HEK293 (cell line): ENCODE measurements at regions of chrX and their contacts with region 1.

Region 1: DNA sequence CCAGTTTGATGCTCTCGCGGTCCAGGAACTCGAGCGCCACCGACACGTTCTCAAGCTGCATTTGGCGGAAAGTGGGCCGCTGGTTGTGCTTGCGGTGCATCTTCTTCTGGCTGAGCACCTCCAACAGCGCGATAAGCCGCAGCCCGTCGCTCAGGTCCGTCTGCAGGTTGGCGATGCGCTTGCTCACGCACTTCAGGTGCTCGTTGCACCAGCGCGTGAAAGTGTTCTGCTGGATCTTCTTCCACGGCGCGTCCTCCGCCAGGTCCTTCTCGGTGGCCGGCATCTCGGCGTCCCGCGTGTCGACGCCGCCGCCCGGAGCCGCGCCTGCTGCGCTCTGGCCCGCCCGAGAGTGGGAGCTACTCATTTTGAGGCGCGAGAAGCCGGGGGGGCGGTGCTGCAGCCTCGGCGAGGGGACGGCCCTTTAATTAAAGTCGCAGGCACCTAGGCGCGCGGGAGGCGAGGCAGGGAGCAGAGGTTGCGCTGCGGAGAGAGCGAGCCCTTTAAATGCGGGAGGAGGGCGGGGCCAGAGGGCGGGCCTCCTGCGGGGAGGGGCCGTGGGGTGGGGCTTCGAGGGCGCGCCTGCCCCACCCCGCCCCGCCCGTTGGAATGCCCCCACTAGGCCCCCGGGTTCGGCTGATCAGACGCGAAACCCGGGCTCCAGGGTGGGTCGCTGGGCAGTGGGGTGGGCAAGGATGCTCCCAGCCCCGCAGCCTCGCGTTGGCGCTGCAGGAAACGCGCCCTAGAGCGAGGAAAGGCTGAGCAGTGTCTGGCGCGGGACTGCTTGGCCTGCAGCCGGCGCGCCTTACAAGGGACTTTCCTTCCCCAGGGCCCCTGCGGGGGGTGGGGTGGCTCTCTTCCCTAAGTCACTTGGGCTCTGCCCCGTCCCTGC is 3.3 kb downstream of the FLNA start:
- H3K4me3 ChIP-seq: peak overlapping the region; percentile 68
- H3K27ac ChIP-seq: peak overlapping the region; percentile 93
- H3K4me1 ChIP-seq: peaks cover 16% of the 10 kb centered on the region
- CTCF ChIP-seq: peak; percentile 46

Region 2: DNA sequence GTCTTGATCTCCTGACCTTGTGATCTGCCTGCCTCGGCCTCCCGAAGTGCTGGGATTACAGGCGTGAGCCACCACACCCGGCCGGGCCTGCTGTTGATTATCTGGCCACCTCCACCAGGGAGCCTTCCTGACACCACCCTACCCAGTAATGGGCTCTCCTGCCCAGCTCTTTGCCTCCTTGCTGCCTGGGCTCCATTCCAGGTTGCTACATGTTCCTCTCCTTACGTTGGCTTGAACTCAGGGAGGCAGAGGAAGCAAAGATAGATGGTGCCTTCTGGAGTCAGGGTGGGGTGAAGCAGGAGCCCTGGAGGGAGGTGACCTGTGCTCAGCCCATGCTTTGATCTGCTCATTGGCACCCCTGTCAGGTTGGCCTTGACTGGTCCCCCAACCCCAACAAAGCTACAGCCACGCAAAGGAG is 23.0 kb before region 1 on chrX:
- CTCF ChIA-PET with region 1: interaction called, 3 read pairs
- POLR2A ChIA-PET with region 1: interaction called, 10 read pairs
- H3K4me3 ChIP-seq: no peak overlapping the region
- H3K27ac ChIP-seq: no peak overlapping the region
- H3K4me1 ChIP-seq: no peaks in the 10 kb centered on the region
- CTCF ChIP-seq: no peak

Region 3: GRCh38 chrX:154384284-154384892 is 13.3 kb after region 1 on chrX:
- CTCF ChIA-PET with region 1: interaction called, 18 read pairs
- POLR2A ChIA-PET with region 1: interaction called, 48 read pairs
- H3K4me3 ChIP-seq: no peak overlapping the region
- H3K27ac ChIP-seq: no peak overlapping the region
- H3K4me1 ChIP-seq: no peaks in the 10 kb centered on the region
- CTCF ChIP-seq: 0 out of 2 replicates have a peak, but pooled peaks have one; percentile 9

Region 4: DNA sequence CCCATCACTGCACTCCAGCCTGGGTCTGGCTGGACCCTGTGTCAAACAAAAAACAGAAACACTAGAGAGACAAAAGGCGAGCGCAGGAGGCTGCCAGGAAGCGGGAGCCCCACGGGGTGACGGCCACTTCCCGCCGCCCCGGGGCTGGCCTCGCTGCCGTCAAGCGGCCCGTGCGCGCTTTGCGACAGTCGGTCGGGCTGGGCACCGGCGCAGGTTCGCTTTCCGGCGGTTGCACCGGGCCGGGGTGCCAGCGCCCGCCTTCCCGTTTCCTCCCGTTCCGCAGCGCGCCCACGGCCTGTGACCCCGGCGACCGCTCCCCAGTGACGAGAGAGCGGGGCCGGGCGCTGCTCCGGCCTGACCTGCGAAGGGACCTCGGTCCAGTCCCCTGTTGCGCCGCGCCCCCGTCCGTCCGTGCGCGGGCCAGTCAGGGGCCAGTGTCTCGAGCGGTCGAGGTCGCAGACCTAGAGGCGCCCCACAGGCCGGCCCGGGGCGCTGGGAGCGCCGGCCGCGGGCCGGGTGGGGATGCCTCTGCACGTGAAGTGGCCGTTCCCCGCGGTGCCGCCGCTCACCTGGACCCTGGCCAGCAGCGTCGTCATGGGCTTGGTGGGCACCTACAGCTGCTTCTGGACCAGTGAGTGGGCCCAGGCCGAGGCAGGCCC is 40.3 kb after region 1 on chrX and contains the start of gene TAFAZZIN:
- CTCF ChIA-PET with region 1: interaction called, 4 read pairs
- POLR2A ChIA-PET with region 1: interaction called, 12 read pairs
- H3K4me3 ChIP-seq: peak within 1 kb of the TSS; percentile 57
- H3K27ac ChIP-seq: peak within 1 kb of the TSS; percentile 92
- H3K4me1 ChIP-seq: no peaks in the 10 kb centered on the region; the same call in 1 of the 2 replicates
- CTCF ChIP-seq: no peak; the same call in 1 of the 2 replicates

Region 5: GRCh38 chrX:154534862-154535670 is 163.9 kb after region 1 on chrX:
- CTCF ChIA-PET with region 1: interaction called, 29 read pairs
- POLR2A ChIA-PET with region 1: interaction called, 4 read pairs
- H3K4me3 ChIP-seq: no peak overlapping the region
- H3K27ac ChIP-seq: no peak overlapping the region
- H3K4me1 ChIP-seq: no peaks in the 10 kb centered on the region
- CTCF ChIP-seq: peak; percentile 100

Region 6: DNA sequence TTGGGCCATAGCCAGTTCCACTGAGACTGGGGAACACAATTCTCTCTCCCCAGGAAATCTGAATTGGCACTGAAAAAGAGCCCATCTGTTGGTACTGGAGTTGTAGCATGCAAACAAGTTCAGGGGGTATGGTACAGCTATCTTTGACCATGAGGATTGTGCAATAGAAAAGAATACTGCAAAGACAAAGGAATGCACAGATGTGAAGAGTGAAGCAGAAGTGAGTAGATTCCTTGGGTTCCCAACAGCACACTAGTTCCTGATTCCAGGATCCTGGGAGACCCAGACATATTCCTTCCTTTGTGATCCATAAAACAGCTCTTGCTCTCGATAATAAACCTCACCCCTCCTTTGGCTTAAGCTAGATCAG is 325.5 kb after region 1 on chrX:
- CTCF ChIA-PET with region 1: no interaction called
- POLR2A ChIA-PET with region 1: no interaction called
- H3K4me3 ChIP-seq: no peak overlapping the region
- H3K27ac ChIP-seq: no peak overlapping the region
- H3K4me1 ChIP-seq: no peaks in the 10 kb centered on the region
- CTCF ChIP-seq: no peak